ENCODE measurements at regions of chr16 and their contacts with region 1.

Region 1: GRCh38 chr16:84186685-84187437 is at the start of gene TAF1C:
- DNase-seq: peak; percentile 97
- ATAC-seq: peak; percentile 86
- H3K4me3 ChIP-seq: peak within 1 kb of the TSS; percentile 87 to 100
- H3K27ac ChIP-seq: peak within 1 kb of the TSS; percentile 49
- H3K4me1 ChIP-seq: peaks cover 9 to 14% of the 10 kb centered on the region in 2 experiments; a peak in 3 of 4 replicates
- H3K27me3 ChIP-seq: no peaks in the 10 kb centered on the region
- CTCF ChIP-seq: peak; percentile 96 to 100 (median 99)
- POLR2A ChIP-seq: peak; percentile 67
- RAD21 ChIP-seq: peak; percentile 99
- total RNA-seq, gene TAF1C: 76.3 TPM

Region 2: DNA sequence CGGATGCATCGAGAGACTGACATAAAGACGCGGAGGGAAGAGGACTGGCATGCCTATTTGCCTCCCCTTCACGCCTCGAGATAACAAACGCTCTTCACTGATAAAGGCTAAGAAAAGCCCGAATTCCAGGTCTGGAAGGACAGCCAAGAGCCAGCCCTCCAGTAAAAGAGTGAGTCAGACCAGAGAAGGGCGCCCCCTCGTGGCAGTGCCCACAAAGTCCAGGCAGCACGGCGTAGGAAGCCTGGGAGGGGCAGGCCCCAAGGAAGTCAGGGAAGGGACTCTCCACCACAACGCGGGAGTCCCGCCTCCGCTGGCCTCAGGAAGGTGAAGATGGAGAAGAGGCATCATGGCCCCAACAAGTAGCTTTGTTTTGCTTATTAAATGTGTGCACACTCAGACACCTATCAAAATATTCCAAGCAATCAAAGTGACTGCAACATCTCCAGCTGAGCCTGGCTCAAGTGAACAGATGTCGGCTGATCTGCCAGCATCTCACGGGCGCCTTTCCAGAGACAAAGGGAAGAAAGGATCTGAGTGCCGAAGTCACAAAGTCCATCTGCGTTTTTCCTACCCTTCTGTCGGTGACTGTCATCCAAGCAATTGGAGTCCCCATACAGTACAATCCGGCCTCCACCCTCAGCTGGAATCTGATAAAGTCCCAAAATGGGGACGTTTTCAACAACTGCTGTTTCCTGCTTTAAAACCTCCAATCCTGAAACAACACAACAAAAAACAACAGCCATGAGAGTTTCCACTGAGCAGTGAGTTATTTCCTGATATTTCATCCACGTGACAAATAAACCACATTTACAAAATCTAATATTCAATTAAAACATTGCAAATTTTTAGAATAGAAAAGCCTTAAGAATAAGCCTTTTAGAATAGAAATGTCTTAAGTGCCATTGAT is 123.9 kb before region 1 on chr16:
- CTCF ChIA-PET with region 1: interaction called, 12 read pairs
- POLR2A ChIA-PET with region 1: no interaction called
- RAD21 ChIA-PET with region 1: no interaction called
- intact Hi-C with region 1: no loop called
- DNase-seq: peak; percentile 52
- ATAC-seq: peak; percentile 99
- H3K4me3 ChIP-seq: no peak overlapping the region
- H3K27ac ChIP-seq: no peak overlapping the region
- H3K4me1 ChIP-seq: peaks cover 0 to 3% of the 10 kb centered on the region in 2 experiments; a peak in 1 of 4 replicates
- H3K27me3 ChIP-seq: no peaks in the 10 kb centered on the region
- CTCF ChIP-seq: peak; percentile 92 to 100 (median 98)
- POLR2A ChIP-seq: no peak
- RAD21 ChIP-seq: peak; percentile 78

Region 3: DNA sequence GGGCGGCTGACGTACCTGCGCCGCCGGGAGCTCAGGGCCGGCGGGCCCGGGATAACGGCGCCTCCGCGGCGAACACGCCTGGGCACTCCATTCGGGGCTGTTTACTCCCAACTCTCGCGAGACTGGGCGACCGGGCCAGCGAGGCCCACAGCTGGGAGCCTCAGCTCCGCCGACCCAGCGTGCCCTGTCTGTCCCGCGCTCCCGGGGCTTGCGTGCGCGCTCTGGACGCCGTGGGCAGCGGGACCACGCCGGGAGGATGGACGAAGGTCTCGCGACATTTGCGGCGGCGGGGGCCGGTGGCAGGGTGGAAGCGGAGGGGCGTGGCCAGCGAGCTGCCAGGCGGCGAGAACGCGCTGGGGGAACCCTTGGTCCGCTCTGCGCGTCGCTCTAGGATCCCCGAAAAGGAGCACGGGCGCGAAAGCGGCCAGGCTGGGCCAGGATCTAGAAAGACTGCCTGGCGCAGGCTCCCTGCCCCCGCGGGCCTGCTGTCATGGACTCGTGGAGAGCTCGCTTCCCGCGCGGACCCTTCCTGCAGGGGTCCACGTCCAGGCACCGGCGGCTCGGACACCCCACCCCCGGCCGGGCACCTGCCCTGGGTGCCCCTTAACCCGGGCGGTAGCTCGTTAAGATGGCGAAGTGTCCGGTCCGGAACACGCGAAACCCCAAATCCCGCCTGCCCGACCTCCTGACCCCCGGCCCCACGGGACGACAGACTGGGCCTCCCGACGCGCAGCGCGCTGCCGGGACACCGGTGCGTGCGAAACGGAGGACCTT is 70.0 kb before region 1 on chr16 and contains the start of gene MBTPS1:
- CTCF ChIA-PET with region 1: interaction called, 13 read pairs
- POLR2A ChIA-PET with region 1: interaction called, 4 read pairs
- RAD21 ChIA-PET with region 1: interaction called, 3 to 5 read pairs
- intact Hi-C with region 1: no loop called
- DNase-seq: peak; percentile 98
- ATAC-seq: peak; percentile 94
- H3K4me3 ChIP-seq: peak within 1 kb of the TSS; percentile 60 to 81
- H3K27ac ChIP-seq: peak within 1 kb of the TSS; percentile 84
- H3K4me1 ChIP-seq: peaks cover 11 to 22% of the 10 kb centered on the region in 2 experiments
- H3K27me3 ChIP-seq: no peaks in the 10 kb centered on the region
- CTCF ChIP-seq: no peak
- POLR2A ChIP-seq: peak; percentile 73
- RAD21 ChIP-seq: no peak
- total RNA-seq, gene MBTPS1: 111 TPM

Region 4: DNA sequence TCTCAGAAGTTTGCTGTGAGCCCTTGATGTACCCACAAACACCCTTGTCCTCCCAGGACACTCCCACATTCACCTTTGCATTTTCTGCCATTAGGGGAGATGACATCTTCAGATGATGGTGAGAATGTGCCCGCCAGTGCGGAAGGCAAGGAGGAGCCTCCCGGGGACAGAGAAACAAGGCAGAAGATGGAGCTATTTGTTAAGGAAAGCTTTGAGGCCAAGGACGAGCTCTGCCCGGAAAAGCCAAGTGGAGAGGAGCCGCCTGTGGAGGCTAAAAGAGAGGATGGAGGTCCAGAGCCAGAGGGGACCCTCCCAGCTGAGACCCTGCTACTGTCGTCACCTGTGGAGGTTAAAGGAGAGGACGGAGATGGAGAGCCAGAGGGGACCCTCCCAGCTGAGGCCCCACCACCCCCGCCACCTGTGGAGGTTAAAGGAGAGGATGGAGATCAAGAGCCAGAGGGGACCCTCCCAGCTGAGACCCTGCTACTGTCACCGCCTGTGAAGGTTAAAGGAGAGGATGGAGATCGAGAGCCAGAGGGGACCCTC is 17.0 kb before region 1 on chr16:
- CTCF ChIA-PET with region 1: interaction called, 11 read pairs
- POLR2A ChIA-PET with region 1: no interaction called
- RAD21 ChIA-PET with region 1: no interaction called
- intact Hi-C with region 1: no loop called
- DNase-seq: no peak
- ATAC-seq: no peak
- H3K4me3 ChIP-seq: no peak overlapping the region
- H3K27ac ChIP-seq: no peak overlapping the region
- H3K4me1 ChIP-seq: no peaks in the 10 kb centered on the region
- H3K27me3 ChIP-seq: 0 out of 2 replicates have a peak, but pooled peaks cover 3% of the 10 kb centered on the region
- CTCF ChIP-seq: no peak
- POLR2A ChIP-seq: no peak
- RAD21 ChIP-seq: no peak

Region 5: GRCh38 chr16:84277237-84277823 is 90.5 kb after region 1 on chr16:
- CTCF ChIA-PET with region 1: interaction called, 10 read pairs
- POLR2A ChIA-PET with region 1: no interaction called
- RAD21 ChIA-PET with region 1: no interaction called
- intact Hi-C with region 1: no loop called
- DNase-seq: peak; percentile 48
- ATAC-seq: peak; percentile 91
- H3K4me3 ChIP-seq: no peak overlapping the region
- H3K27ac ChIP-seq: no peak overlapping the region
- H3K4me1 ChIP-seq: no peaks in the 10 kb centered on the region
- H3K27me3 ChIP-seq: no peaks in the 10 kb centered on the region
- CTCF ChIP-seq: peak; percentile 94 to 99 (median 98)
- POLR2A ChIP-seq: no peak
- RAD21 ChIP-seq: peak; percentile 97

Region 6: DNA sequence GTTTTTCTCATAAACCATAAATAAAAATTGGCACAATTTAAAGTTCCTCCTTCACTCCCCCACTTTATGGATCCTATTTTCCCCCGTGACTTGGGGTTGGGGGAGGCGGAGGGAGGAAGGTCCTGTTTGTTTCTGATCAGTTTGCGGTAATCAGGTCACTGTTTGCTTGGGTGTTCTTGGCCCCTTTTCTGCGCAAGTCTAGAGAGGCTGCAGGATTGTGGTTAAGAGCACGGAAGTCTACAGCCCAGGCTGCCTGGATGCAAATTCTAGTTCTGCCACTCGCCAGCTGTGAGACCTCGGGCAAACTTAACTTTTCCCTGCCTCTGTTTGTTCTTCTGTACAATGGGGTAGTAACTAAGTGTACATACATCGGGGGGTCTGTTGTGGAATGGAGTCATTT is 193.5 kb after region 1 on chr16:
- CTCF ChIA-PET with region 1: no interaction called
- POLR2A ChIA-PET with region 1: no interaction called
- RAD21 ChIA-PET with region 1: no interaction called
- intact Hi-C with region 1: no loop called
- DNase-seq: no peak
- ATAC-seq: no peak
- H3K4me3 ChIP-seq: no peak overlapping the region
- H3K27ac ChIP-seq: no peak overlapping the region
- H3K4me1 ChIP-seq: peaks cover 8 to 11% of the 10 kb centered on the region in 2 experiments; a peak in 3 of 4 replicates
- H3K27me3 ChIP-seq: no peaks in the 10 kb centered on the region
- CTCF ChIP-seq: no peak
- POLR2A ChIP-seq: no peak
- RAD21 ChIP-seq: no peak

Region 7: GRCh38 chr16:84484579-84485254 is 297.9 kb after region 1 on chr16:
- CTCF ChIA-PET with region 1: interaction called, 3 read pairs
- POLR2A ChIA-PET with region 1: no interaction called
- RAD21 ChIA-PET with region 1: no interaction called
- intact Hi-C with region 1: loop called (anchors 10 kb)
- DNase-seq: peak; percentile 41
- ATAC-seq: peak; percentile 84
- H3K4me3 ChIP-seq: no peak overlapping the region
- H3K27ac ChIP-seq: no peak overlapping the region
- H3K4me1 ChIP-seq: no peaks in the 10 kb centered on the region
- H3K27me3 ChIP-seq: no peaks in the 10 kb centered on the region
- CTCF ChIP-seq: peak; percentile 75 to 91 (median 80)
- POLR2A ChIP-seq: no peak
- RAD21 ChIP-seq: peak; percentile 95

Region 8: GRCh38 chr16:84518748-84519341 is 332.0 kb after region 1 on chr16:
- CTCF ChIA-PET with region 1: no interaction called
- POLR2A ChIA-PET with region 1: no interaction called
- RAD21 ChIA-PET with region 1: no interaction called
- intact Hi-C with region 1: no loop called
- DNase-seq: no peak
- ATAC-seq: no peak
- H3K4me3 ChIP-seq: no peak overlapping the region
- H3K27ac ChIP-seq: no peak overlapping the region
- H3K4me1 ChIP-seq: peaks cover 0 to 17% of the 10 kb centered on the region in 2 experiments; a peak in 2 of 4 replicates
- H3K27me3 ChIP-seq: no peaks in the 10 kb centered on the region; the same call in 1 of the 2 replicates
- CTCF ChIP-seq: no peak
- POLR2A ChIP-seq: no peak
- RAD21 ChIP-seq: no peak